PC-3 (cell line): ENCODE measurements at regions of chr12 and their contacts with region 1.

Region 1: DNA sequence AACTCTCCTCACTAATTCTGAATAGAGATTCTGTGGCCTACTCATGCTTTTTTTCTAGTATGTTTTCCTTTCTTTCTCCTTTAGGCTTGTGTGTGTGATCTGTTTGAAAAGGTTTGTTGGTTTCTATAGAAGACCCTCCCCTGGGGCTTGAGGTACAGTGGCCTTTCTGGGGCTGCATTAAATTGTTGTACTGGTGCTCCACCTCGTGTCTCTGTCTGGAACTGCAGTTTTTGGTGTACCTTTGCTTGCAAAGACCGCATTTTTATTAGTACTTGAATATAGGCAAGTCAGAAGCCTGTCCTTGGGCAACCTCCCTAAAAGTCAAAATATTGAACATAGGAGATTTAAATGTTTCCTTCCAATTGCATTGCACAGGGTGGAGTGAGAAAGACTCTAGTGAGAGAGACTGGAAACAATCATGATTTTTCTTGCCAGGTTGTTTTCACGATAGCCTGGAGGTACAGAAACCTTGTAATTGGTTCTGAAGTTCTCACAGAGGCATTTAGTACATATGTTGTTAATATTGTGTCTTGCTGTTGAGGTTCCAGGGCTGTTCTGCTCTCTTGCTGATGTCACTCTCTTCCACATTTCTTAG is 39.0 kb downstream of the SLCO1B1 start:
- DNase-seq: peak; percentile 54
- ATAC-seq: no peak
- H3K4me3 ChIP-seq: no peak overlapping the region
- H3K27ac ChIP-seq: no peak overlapping the region
- H3K4me1 ChIP-seq: no peaks in the 10 kb centered on the region
- H3K27me3 ChIP-seq: no peaks in the 10 kb centered on the region
- CTCF ChIP-seq: peak; percentile 85

Region 2: DNA sequence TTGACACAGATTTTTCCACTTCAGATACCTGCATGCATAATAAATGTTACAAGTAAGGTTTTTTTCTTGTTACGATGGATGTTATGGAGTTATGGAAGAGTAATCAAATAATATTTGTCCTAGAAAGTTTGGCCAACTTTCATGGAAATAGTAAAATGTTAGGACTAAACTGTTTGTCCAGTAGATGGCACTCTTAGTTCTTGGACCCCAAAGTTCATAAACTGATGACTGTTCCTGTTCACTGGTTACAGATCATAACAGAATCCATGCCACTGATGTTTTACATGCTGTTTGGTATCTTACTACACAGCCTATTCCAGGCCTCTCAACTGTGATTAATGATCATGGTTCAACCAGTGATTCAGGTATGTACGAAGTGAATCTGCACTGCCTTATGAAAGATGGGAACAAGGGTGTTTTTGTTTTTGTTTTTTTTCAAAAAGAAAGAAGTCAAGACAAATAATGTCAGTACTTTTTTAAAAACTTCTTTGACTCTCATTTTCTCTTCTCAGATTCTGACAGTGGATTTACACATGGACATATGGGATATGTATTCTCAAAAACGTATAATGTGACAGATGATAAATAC is 523.6 kb before region 1 on chr12:
- CTCF ChIA-PET with region 1: no interaction called
- POLR2A ChIA-PET with region 1: no interaction called
- intact Hi-C with region 1: loop called (anchors 1 kb)
- DNase-seq: peak; percentile 54
- ATAC-seq: peak; percentile 64
- H3K4me3 ChIP-seq: no peak overlapping the region
- H3K27ac ChIP-seq: no peak overlapping the region
- H3K4me1 ChIP-seq: no peaks in the 10 kb centered on the region
- H3K27me3 ChIP-seq: no peaks in the 10 kb centered on the region
- CTCF ChIP-seq: peak; percentile 70

Region 3: DNA sequence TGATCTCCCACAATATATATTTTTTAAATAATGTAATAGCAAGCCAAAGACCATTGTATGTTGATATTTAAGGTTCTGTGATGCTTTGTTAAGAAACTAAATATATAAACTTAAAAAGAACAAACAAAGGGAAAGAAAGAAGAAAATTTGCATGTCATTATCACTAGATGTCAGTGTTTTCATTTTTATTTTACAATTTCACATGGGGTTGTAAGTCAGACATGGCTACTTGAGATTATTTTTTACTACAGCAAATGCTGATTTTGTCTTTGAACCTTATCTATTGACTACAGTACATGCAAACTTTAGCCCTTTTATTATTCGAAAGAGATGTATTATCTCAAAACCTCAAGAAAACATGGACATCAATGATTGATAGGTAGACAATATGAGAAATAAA is 438.7 kb before region 1 on chr12:
- CTCF ChIA-PET with region 1: no interaction called
- POLR2A ChIA-PET with region 1: no interaction called
- intact Hi-C with region 1: loop called (anchors 10 kb)
- DNase-seq: no peak
- ATAC-seq: no peak
- H3K4me3 ChIP-seq: no peak overlapping the region
- H3K27ac ChIP-seq: no peak overlapping the region
- H3K4me1 ChIP-seq: no peaks in the 10 kb centered on the region
- H3K27me3 ChIP-seq: no peaks in the 10 kb centered on the region
- CTCF ChIP-seq: 0 out of 2 replicates have a peak, but pooled peaks have one; percentile 22

Region 4: GRCh38 chr12:20950248-20950647 is 219.7 kb before region 1 on chr12:
- CTCF ChIA-PET with region 1: no interaction called
- POLR2A ChIA-PET with region 1: no interaction called
- intact Hi-C with region 1: loop called (anchors 2 kb)
- DNase-seq: peak; percentile 58
- ATAC-seq: peak; percentile 58
- H3K4me3 ChIP-seq: no peak overlapping the region
- H3K27ac ChIP-seq: no peak overlapping the region
- H3K4me1 ChIP-seq: no peaks in the 10 kb centered on the region
- H3K27me3 ChIP-seq: no peaks in the 10 kb centered on the region
- CTCF ChIP-seq: peak; percentile 64

Region 5: DNA sequence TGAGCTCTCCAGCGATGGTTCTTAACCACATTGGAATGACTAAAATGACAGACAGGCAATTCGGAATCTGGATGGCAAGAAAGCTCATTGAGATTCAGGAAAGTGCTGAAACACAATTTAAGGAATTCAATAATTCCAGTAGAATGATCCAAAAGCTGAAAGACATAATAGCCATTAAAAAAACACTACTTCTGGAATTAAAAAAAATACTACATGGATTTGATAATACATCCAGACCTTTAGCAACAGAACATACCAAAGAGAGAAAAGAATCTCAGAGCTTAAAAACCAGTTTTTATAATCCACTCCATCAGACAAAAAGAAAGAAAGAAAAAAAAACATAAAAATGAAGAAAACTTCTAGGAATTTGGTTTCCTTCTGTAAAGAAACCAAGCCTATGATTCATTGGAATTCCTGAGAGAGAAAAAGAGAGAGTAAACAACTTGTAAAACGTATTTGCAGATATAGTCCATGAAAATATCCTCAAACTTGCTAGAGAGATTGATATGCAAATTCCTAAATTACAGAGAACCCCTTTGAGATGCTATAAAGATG is 13.8 kb after region 1 on chr12:
- CTCF ChIA-PET with region 1: no interaction called
- POLR2A ChIA-PET with region 1: no interaction called
- intact Hi-C with region 1: no loop called
- DNase-seq: peak; percentile 29
- ATAC-seq: no peak
- H3K4me3 ChIP-seq: no peak overlapping the region
- H3K27ac ChIP-seq: no peak overlapping the region
- H3K4me1 ChIP-seq: no peaks in the 10 kb centered on the region
- H3K27me3 ChIP-seq: peaks cover 9% of the 10 kb centered on the region; the same call in 1 of the 2 replicates
- CTCF ChIP-seq: no peak

Region 6: DNA sequence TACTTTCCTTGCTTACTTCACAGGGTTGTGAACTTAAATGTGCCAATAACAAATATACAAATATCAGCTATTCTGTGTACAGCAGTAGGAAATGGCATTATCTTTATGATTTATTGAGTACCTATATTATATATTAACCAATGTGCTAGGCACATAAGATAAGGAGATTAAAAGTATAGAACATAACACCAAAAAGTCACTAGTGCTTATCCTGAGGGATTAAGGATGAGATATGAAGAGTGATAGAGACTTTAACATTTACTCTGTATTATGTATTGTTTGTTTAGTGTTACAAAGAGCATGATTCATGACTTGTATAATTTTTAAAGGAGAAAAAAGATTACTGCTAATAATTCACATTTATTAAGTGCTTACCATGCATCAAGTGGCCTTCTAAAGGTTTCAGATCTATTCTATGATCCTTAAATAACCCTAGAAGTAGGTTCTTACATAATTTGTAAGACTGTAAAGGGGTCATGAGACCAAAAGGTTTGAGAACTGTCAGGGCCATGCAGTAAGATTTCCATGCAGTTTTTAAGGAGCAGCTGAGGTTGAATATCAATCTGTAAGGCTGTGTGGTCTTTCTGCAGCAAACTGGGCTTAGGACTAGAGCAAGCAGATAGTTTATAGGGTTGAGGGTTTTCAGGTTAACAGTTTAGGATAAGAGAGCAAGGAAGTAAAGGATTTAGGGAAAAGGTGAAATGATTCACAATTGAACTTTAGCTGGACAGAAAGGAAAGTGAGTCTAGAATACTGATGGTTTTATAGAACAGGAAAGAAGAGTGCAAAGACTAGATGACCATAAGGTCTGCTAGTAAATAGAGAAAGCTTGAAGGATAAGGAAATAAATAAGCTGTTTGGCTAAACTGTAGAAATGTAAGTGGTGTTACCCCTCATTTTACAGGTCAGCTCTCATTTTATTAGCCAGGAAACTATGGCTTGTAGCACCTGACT is 274.5 kb after region 1 on chr12:
- CTCF ChIA-PET with region 1: no interaction called
- POLR2A ChIA-PET with region 1: no interaction called
- intact Hi-C with region 1: no loop called
- DNase-seq: peak; percentile 22
- ATAC-seq: peak; percentile 94
- H3K4me3 ChIP-seq: peak overlapping the region; percentile 32; the same call in 1 of the 2 replicates
- H3K27ac ChIP-seq: peak overlapping the region; percentile 53
- H3K4me1 ChIP-seq: peaks cover 16% of the 10 kb centered on the region
- H3K27me3 ChIP-seq: no peaks in the 10 kb centered on the region
- CTCF ChIP-seq: no peak